Heart right ventricle (tissue), 16 donors: ENCODE measurements at regions of chr2 and their contacts with region 1.

Region 1: DNA sequence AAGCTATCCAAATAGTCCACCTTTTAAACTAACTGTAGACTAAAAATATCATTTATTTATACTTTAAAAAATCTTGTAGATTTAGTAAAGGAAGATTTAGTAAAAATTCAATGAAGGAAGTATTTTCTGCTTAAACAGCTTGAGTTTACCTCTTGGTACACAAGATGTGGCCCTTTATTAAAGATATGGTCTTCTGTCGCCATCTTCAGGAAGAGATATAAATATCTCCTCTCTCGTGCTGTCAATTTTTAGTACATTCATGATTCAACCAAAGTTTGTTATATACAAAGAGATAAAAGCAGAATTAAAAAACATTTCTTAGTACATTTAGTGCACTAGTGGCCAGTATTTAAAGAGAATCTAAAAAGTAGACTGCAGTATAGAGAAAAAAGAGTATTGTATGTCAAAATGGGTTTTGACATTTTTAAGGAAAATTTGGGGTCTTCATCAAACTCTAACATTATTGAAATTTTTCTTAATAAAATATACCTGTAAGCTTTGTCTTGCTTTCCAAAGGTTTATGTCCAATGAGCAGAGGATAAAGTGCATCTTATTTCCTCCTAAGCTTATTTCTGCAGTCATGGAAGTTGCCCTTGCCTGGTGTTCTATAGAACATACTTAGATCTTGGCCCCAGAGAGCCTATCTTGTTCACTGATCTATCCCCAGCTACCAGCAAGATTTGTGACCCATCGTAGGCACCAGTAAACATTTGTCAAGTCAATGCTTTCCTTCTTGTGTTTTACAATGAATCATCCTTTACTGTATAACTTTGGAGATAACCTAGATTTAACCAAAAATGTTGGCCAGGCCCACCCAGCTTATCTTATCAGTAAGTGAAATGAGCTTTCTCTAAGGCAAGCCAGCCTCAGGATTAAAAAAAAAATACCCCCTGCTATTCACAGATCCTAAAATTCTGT is 18.5 kb upstream of the EML6 start:
- DNase-seq: no peak
- ATAC-seq: peak in 7 of 8 donors; percentile 58 to 75 (median 65)
- H3K4me3 ChIP-seq: no peak overlapping the region
- H3K27ac ChIP-seq: peak overlapping the region in 2 of 10 donors; percentile 2 to 5
- H3K4me1 ChIP-seq: peaks cover 0 to 15% (median 7%) of the 10 kb centered on the region in 9 donors
- H3K27me3 ChIP-seq: peaks cover 0 to 21% (median 0%) of the 10 kb centered on the region in 7 donors
- CTCF ChIP-seq: peak; percentile 41 to 79 (median 72)

Region 2: GRCh38 chr2:54106631-54107454 is 598.1 kb before region 1 on chr2:
- intact Hi-C with region 1: loop called in 6 of 10 experiments (anchors 5 to 10 kb)
- DNase-seq: peak in 1 of 2 donors; percentile 36
- ATAC-seq: peak in 7 of 8 donors; percentile 65 to 84 (median 74)
- H3K4me3 ChIP-seq: no peak overlapping the region
- H3K27ac ChIP-seq: no peak overlapping the region
- H3K4me1 ChIP-seq: peaks cover 0 to 15% (median 9%) of the 10 kb centered on the region in 9 donors
- H3K27me3 ChIP-seq: no peaks in the 10 kb centered on the region
- CTCF ChIP-seq: peak; percentile 33 to 77 (median 67)

Region 3: DNA sequence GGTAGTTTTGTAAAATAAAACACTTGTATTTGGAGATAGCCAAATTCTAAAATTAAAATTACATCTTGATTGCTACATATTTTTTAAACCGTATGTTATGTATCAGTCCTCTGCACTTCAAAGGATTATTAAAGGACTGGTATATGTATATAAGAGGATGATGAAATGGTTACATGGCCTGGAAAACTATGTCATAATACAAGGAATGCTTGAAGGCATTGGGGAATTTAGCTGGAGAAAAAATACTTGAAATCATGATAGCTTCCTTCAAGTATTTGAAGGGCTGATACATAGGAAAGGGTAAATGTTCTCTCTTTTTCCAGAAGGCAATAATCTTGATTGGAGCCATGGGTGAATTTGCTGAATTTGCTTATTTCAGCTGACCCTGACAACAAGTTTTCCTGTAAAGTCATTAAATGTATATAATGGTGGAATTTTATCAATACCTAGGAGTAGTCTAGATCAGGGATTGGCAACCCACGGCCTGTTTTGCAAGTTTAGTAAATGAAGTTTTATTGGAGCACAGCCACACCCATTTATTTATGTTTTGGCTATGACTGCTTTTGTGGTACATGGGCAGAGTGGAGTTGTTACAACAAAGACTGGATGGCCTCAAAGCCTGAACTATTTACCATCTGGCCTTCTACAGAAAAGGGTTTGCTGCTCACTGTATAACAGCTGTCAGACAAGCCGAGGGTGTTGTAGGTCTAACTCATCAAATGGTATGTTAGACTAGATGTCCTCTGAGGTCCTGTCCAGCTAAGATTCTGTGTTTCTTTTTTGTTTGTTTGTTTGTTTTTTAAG is 555.1 kb before region 1 on chr2:
- intact Hi-C with region 1: loop called in 1 of 10 experiments (anchors 10 kb)
- DNase-seq: no peak
- ATAC-seq: no peak
- H3K4me3 ChIP-seq: no peak overlapping the region
- H3K27ac ChIP-seq: no peak overlapping the region
- H3K4me1 ChIP-seq: no peaks in the 10 kb centered on the region
- H3K27me3 ChIP-seq: no peaks in the 10 kb centered on the region
- CTCF ChIP-seq: no peak

Region 4: DNA sequence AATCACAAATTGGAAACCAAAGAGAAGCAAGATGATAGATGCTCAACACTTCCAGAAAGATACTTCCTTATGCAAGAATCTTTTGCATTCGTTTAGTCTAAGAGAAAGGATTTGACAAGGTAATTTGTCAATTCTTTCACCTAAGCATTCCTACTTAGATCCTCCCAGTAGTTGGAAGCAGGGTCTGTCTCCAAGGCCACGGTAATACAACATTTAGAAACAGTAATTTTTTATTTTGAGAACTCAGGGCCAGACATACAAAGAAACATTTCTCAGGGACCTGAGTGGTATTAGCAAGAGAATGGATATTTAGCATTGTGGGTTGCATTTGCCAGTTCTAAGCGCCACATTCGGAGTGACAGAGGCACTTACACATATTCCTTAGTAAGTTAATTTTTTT is 521.0 kb before region 1 on chr2:
- intact Hi-C with region 1: loop called in 7 of 10 experiments (anchors 5 to 10 kb)
- DNase-seq: no peak
- ATAC-seq: no peak
- H3K4me3 ChIP-seq: no peak overlapping the region
- H3K27ac ChIP-seq: no peak overlapping the region
- H3K4me1 ChIP-seq: peaks cover 0 to under 1% (median 0%) of the 10 kb centered on the region in 9 donors
- H3K27me3 ChIP-seq: no peaks in the 10 kb centered on the region
- CTCF ChIP-seq: no peak

Region 5: DNA sequence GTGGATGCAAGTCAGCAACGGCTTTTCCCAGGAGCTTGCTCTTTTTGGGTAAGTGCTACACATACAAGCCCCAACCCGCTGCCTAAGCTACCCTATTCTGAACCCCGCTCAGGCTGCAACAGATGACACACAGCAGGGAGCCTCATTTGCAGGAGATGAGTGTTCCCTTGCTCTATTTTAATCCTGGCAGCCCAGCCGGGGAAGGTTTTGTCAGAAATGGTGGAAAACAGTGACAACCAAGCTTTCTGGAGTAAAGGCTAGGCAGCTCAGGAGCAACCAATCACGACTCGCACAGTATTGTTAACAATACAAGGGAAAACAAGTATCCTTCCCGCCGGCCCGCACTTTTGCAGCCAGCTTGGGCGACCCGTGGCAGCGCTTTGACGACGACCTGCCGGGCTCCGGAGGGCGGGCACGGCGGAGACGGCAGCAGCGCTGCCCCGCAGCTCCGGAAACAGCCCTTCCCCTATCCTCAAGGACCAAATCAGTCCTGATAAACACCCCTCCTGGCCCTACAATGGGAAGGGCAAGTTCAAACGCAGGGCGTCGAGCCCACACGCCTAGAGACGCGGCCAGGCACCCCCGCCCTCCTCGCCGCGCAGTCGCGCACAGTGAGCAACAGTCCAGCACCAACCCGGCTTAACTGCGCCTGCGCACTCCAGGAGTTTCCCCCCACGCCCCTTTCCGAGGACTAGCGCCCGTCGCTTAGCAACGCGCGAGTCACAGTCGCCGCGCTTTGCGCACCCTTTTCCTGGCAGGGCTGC is 374.6 kb before region 1 on chr2:
- intact Hi-C with region 1: loop called in 2 of 10 experiments (anchors 5 to 10 kb)
- DNase-seq: peak; percentile 98
- ATAC-seq: peak; percentile 98 to 99 (median 99)
- H3K4me3 ChIP-seq: peak overlapping the region; percentile 9 to 74 (median 62)
- H3K27ac ChIP-seq: peak overlapping the region; percentile 75 to 97 (median 92)
- H3K4me1 ChIP-seq: peaks cover 2 to 26% (median 19%) of the 10 kb centered on the region in 9 donors
- H3K27me3 ChIP-seq: peaks cover 0 to 7% (median 0%) of the 10 kb centered on the region in 7 donors
- CTCF ChIP-seq: no peak

Region 6: GRCh38 chr2:54665436-54665856 is 39.5 kb before region 1 on chr2:
- intact Hi-C with region 1: loop called in 5 of 10 experiments (anchors 5 kb)
- DNase-seq: no peak
- ATAC-seq: peak in 6 of 8 donors; percentile 5 to 32 (median 20)
- H3K4me3 ChIP-seq: no peak overlapping the region
- H3K27ac ChIP-seq: peak overlapping the region; percentile 53 to 94 (median 76)
- H3K4me1 ChIP-seq: peaks cover 3 to 70% (median 52%) of the 10 kb centered on the region in 9 donors
- H3K27me3 ChIP-seq: no peaks in the 10 kb centered on the region
- CTCF ChIP-seq: peak; percentile 34 to 74 (median 62)

Region 7: GRCh38 chr2:54966165-54966832 is 261.4 kb after region 1 on chr2:
- intact Hi-C with region 1: no loop called
- DNase-seq: no peak
- ATAC-seq: peak in 5 of 8 donors; percentile 25 to 76 (median 49)
- H3K4me3 ChIP-seq: no peak overlapping the region
- H3K27ac ChIP-seq: peak overlapping the region in 5 of 10 donors; percentile 19 to 69 (median 26)
- H3K4me1 ChIP-seq: peaks cover 0 to 62% (median 36%) of the 10 kb centered on the region in 9 donors
- H3K27me3 ChIP-seq: peaks cover 0 to 29% (median 0%) of the 10 kb centered on the region in 7 donors
- CTCF ChIP-seq: no peak